Mammary epithelial cell (primary cell): ENCODE measurements at regions of chr16 and their contacts with region 1.

Region 1: DNA sequence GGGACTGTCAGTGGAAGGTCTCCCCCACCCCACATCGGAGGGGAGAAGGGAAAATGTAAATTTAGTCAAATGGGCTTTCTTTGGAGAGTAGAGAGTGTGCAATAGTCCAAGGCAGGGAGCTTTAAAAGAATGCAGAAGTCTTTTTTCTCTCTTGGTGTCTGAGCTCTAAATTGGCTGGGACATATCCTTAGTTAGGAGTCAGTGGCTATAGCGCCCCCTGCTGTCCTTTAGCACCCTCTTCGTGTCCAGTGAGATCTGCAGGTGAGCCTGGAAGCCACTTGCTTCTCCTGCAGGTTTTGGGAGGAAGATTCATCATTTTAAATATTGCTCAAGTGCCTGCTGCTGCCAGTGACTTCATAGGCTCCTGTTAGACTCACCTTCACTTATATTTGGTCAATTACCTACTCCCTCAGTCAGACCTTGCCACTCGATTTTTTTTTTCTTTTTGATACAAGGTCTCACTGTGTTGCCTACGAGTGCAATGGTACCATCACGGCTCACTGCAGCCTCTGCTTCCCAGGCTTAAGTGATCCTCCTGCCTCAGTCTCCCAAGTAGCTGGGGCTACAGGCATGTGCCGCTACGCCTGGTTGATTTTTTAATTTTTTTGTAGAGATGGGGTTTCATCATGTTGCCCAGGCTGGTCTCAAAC is 174.8 kb downstream of the PRKCB start:
- DNase-seq: peak; percentile 66
- H3K4me3 ChIP-seq: no peak overlapping the region
- H3K27ac ChIP-seq: no peak overlapping the region
- H3K4me1 ChIP-seq: no peaks in the 10 kb centered on the region
- H3K27me3 ChIP-seq: peaks cover 2% of the 10 kb centered on the region
- CTCF ChIP-seq: peak; percentile 76 to 85

Region 2: GRCh38 chr16:23739516-23739915 is 271.0 kb before region 1 on chr16:
- CTCF ChIA-PET with region 1: interaction called, 3 read pairs
- dilution Hi-C with region 1: no loop called
- in situ Hi-C with region 1: loop called in 1 of 2 experiments (anchors 5 kb)
- intact Hi-C with region 1: loop called (anchors 1 kb)
- DNase-seq: no peak
- H3K4me3 ChIP-seq: no peak overlapping the region
- H3K27ac ChIP-seq: no peak overlapping the region
- H3K4me1 ChIP-seq: no peaks in the 10 kb centered on the region
- H3K27me3 ChIP-seq: peaks cover 3% of the 10 kb centered on the region
- CTCF ChIP-seq: no peak

Region 3: DNA sequence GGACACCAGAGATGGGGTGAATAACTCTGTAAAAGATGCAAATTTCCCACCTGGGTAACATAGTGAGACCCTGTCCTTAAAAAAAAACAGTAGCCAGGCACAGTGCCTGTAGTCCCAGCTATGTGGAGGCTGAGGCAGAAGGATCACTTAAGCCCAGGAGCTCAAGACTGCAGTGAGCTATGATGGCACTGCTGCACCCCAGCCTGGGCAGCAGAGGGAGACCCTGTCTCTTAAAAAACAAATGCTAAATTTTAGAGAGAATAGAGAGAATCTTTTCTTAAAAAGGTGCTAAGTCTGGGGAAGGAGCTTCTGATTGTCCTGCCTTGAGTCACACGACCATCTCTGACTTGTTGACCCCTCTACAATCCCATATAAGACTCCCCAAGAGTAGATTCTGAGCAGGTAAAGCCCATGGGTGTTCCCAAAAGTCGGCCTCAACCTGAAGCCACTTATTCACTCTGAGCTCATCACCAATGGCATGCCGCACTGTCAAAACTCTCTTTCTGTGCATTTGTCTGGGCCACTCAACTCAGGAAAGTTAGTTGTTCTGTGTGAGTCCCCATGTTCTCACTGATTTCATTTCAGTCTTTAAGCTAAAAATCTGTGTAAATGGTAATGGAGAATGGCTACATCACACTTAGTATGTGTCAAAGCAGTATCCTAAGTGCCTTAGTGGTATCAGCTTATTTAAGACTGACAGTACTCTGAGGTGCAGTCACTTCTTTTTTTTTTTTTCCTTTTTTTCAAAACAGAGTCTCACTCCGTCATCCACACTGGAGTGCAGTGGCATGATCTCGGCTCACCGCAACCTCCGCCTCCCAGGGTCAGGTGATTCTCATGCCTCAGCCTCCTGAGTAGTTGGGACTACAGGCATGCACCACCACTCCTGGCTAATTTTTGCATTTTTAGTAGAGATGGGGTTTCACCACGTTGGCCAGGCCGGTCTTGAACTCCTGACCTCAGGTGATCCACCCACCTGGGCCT is 133.2 kb before region 1 on chr16:
- CTCF ChIA-PET with region 1: interaction called, 3 read pairs
- dilution Hi-C with region 1: no loop called
- in situ Hi-C with region 1: no loop called
- intact Hi-C with region 1: loop called (anchors 2 kb)
- DNase-seq: no peak
- H3K4me3 ChIP-seq: no peak overlapping the region
- H3K27ac ChIP-seq: no peak overlapping the region
- H3K4me1 ChIP-seq: no peaks in the 10 kb centered on the region
- H3K27me3 ChIP-seq: no peaks in the 10 kb centered on the region
- CTCF ChIP-seq: peak in 1 of 2 donors; percentile 10

Region 4: DNA sequence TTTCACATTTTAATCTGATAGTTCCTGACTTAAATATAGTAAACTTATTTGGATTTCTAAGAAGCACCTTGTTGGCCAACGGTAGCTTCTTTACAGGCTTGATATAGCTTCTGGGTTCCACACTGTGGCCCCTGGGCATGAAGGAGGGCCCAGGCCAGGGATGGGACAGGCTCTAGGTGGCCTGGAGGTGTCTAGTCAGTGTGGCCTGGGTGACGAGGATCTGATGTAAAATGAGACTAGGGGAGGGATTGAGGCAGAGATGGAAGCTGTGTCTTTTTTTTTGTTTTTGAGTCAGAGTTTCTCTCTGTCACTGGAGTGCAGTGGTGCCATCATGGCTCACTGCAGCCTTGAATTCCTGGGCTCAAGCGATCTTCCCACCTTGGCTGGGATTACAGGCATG is 12.2 kb after region 1 on chr16:
- CTCF ChIA-PET with region 1: no interaction called
- dilution Hi-C with region 1: no loop called
- in situ Hi-C with region 1: no loop called
- intact Hi-C with region 1: no loop called
- DNase-seq: no peak
- H3K4me3 ChIP-seq: no peak overlapping the region
- H3K27ac ChIP-seq: no peak overlapping the region
- H3K4me1 ChIP-seq: no peaks in the 10 kb centered on the region
- H3K27me3 ChIP-seq: no peaks in the 10 kb centered on the region
- CTCF ChIP-seq: no peak